Activated CD4-positive, alpha-beta T cell treated with anti-CD3 and anti-CD28 coated beads for 36 hours (primary cell): ENCODE measurements at regions of chr15 and their contacts with region 1.

Region 1: GRCh38 chr15:62060113-62060895 is at the start of gene VPS13C:
- DNase-seq: peak; percentile 94
- ATAC-seq: peak; percentile 90
- H3K4me3 Mint-ChIP-seq: peak within 1 kb of the TSS; percentile 95
- H3K27ac Mint-ChIP-seq: peak within 1 kb of the TSS; percentile 93
- H3K4me1 Mint-ChIP-seq: peaks cover 43% of the 10 kb centered on the region
- H3K27me3 Mint-ChIP-seq: peaks cover 1% of the 10 kb centered on the region
- total RNA-seq, gene VPS13C: 40.1 to 47.2 TPM

Region 2: GRCh38 chr15:61974759-61975158 is 85.5 kb before region 1 on chr15:
- CTCF ChIA-PET with region 1: no interaction called
- POLR2A ChIA-PET with region 1: no interaction called
- intact Hi-C with region 1: loop called in 1 of 2 experiments (anchors 10 kb)
- DNase-seq: no peak
- ATAC-seq: peak; percentile 19
- H3K4me3 Mint-ChIP-seq: no peak overlapping the region
- H3K27ac Mint-ChIP-seq: no peak overlapping the region
- H3K4me1 Mint-ChIP-seq: peaks cover 8% of the 10 kb centered on the region
- H3K27me3 Mint-ChIP-seq: no peaks in the 10 kb centered on the region

Region 3: DNA sequence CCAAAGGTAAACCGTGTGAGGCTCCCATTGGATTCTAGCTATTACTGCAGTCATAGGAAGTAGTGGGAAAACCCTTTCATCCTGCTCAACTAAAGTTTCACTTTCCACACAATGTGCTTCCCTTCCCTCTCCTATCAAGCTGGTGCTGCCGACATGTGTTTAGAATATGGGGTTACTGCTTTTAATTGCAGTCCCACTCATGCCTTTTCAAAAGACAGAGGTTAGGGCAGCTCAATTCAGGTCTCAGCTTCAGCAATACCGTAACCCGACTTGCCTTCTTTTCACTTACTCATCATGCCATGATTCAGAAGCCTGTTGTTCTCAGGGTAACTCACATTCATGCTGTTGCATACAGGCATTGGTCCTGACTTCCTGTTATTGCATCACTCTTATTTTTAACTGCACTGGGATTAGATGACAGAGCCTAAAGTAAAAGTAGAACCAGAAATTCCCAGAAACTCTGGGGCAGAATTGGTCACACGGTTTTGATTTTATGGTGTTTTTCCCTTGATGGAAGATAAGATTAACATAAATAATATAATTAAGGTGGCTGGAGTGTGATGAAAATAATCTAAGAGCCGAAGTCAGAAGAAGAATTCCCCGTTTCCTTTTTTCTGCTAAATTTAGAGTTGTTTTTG is 59.0 kb after region 1 on chr15:
- CTCF ChIA-PET with region 1: interaction called, 3 read pairs
- POLR2A ChIA-PET with region 1: no interaction called
- intact Hi-C with region 1: loop called (anchors 1 to 5 kb)
- DNase-seq: peak; percentile 46
- ATAC-seq: peak; percentile 99
- H3K4me3 Mint-ChIP-seq: peak overlapping the region; percentile 17
- H3K27ac Mint-ChIP-seq: peak overlapping the region; percentile 94
- H3K4me1 Mint-ChIP-seq: peaks cover 48% of the 10 kb centered on the region
- H3K27me3 Mint-ChIP-seq: no peaks in the 10 kb centered on the region

Region 4: GRCh38 chr15:62150445-62150844 is 90.1 kb after region 1 on chr15:
- CTCF ChIA-PET with region 1: interaction called, 3 read pairs
- POLR2A ChIA-PET with region 1: no interaction called
- intact Hi-C with region 1: loop called in 1 of 2 experiments (anchors 2 kb)
- DNase-seq: no peak
- ATAC-seq: peak; percentile 41
- H3K4me3 Mint-ChIP-seq: no peak overlapping the region
- H3K27ac Mint-ChIP-seq: peak overlapping the region; percentile 17
- H3K4me1 Mint-ChIP-seq: peaks cover 35% of the 10 kb centered on the region
- H3K27me3 Mint-ChIP-seq: peaks cover 8% of the 10 kb centered on the region